Mucosa of descending colon (tissue), 3 donors: ENCODE measurements at regions of chr12 and their contacts with region 1.

Region 1: GRCh38 chr12:115752913-115753726 is 524.4 kb downstream of the MED13L start:
- DNase-seq: peak in 1 of 3 donors; percentile 77
- ATAC-seq: peak; percentile 89
- H3K4me3 ChIP-seq: no peak overlapping the region
- H3K4me1 ChIP-seq: no peaks in the 10 kb centered on the region
- CTCF ChIP-seq: no peak

Region 2: GRCh38 chr12:114668151-114668885 is 1084.8 kb before region 1 on chr12:
- intact Hi-C with region 1: loop called in 1 of 2 experiments (anchors 2 kb)
- DNase-seq: peak; percentile 86 to 91 (median 90)
- ATAC-seq: peak; percentile 98
- H3K4me3 ChIP-seq: no peak overlapping the region
- H3K4me1 ChIP-seq: peaks cover 3% of the 10 kb centered on the region
- CTCF ChIP-seq: no peak

Region 3: GRCh38 chr12:116484807-116485206 is 731.7 kb after region 1 on chr12:
- intact Hi-C with region 1: no loop called
- DNase-seq: no peak
- ATAC-seq: no peak
- H3K4me3 ChIP-seq: no peak overlapping the region
- H3K4me1 ChIP-seq: no peaks in the 10 kb centered on the region
- CTCF ChIP-seq: no peak